HepG2 (cell line): ENCODE measurements at regions of chr12 and their contacts with region 1.

Region 1: DNA sequence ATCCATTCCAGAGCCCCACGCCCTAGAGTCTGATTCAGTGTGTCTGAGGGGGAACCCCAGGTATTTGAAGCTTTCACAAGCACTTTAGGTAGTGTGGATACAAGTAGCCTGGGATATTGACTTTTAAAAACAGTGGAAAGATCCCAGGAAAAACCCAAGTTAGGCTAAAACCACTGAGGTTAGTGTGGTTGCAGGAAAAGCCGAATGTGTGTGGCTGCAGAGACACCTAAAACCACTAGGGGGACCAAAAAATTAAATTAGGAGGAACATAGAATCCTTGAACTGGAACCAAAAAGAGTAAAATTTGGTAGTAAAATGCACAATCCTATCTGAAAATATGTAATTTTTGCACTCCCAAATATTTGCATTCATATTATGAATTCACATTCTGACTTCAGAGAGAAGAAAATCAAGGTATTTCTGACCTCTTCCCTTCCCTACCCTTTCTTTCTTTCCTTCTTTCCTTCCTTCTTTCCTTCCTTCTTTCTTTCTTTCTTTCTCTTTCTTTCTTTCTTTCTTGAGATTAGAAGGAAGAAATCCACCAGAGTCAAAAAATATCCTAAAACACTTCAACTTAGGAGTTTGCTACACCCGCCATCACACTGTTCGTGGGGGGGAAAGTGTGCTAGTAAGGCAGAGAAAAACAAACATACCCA is 37.8 kb downstream of the SLCO1A2 start:
- DNase-seq: no peak
- ATAC-seq: peak; percentile 72
- H3K4me3 ChIP-seq: no peak overlapping the region
- H3K27ac ChIP-seq: no peak overlapping the region
- H3K4me1 ChIP-seq: no peaks in the 10 kb centered on the region
- H3K27me3 ChIP-seq: no peaks in the 10 kb centered on the region
- CTCF ChIP-seq: peak; percentile 39; the same call in 1 of the 2 replicates
- EP300 ChIP-seq: no peak
- POLR2A ChIP-seq: no peak
- RAD21 ChIP-seq: no peak

Region 2: GRCh38 chr12:21265932-21266331 is 30.9 kb before region 1 on chr12:
- CTCF ChIA-PET with region 1: no interaction called
- POLR2A ChIA-PET with region 1: no interaction called
- in situ Hi-C with region 1: no loop called
- intact Hi-C with region 1: loop called (anchors 2 kb)
- DNase-seq: no peak
- ATAC-seq: no peak
- H3K4me3 ChIP-seq: no peak overlapping the region
- H3K27ac ChIP-seq: no peak overlapping the region
- H3K4me1 ChIP-seq: no peaks in the 10 kb centered on the region
- H3K27me3 ChIP-seq: no peaks in the 10 kb centered on the region
- CTCF ChIP-seq: no peak
- EP300 ChIP-seq: no peak
- POLR2A ChIP-seq: no peak
- RAD21 ChIP-seq: no peak

Region 3: GRCh38 chr12:21683115-21683514 is 386.2 kb after region 1 on chr12:
- CTCF ChIA-PET with region 1: no interaction called
- POLR2A ChIA-PET with region 1: no interaction called
- in situ Hi-C with region 1: loop called (anchors 25 kb)
- intact Hi-C with region 1: loop called (anchors 5 kb)
- DNase-seq: no peak
- ATAC-seq: no peak
- H3K4me3 ChIP-seq: no peak overlapping the region
- H3K27ac ChIP-seq: no peak overlapping the region
- H3K4me1 ChIP-seq: no peaks in the 10 kb centered on the region
- H3K27me3 ChIP-seq: no peaks in the 10 kb centered on the region; a peak in 1 of 5 replicates
- CTCF ChIP-seq: no peak
- EP300 ChIP-seq: no peak
- POLR2A ChIP-seq: no peak
- RAD21 ChIP-seq: no peak